Activated naive CD4-positive, alpha-beta T cell treated with anti-CD3 and anti-CD28 coated beads, Interleukin-2, amount 10 ng/mL, durations not matched to agents 7 days and 5 days (primary cell): ENCODE measurements at regions of chr1 and their contacts with region 1.

Region 1: GRCh38 chr1:207004981-207005830 is 27.4 kb downstream of the C1orf116 start:
- DNase-seq: peak; percentile 62
- H3K4me3 Mint-ChIP-seq: no peak overlapping the region
- H3K27ac Mint-ChIP-seq: no peak overlapping the region
- H3K4me1 Mint-ChIP-seq: no peaks in the 10 kb centered on the region
- H3K27me3 Mint-ChIP-seq: peaks cover 65% of the 10 kb centered on the region

Region 2: DNA sequence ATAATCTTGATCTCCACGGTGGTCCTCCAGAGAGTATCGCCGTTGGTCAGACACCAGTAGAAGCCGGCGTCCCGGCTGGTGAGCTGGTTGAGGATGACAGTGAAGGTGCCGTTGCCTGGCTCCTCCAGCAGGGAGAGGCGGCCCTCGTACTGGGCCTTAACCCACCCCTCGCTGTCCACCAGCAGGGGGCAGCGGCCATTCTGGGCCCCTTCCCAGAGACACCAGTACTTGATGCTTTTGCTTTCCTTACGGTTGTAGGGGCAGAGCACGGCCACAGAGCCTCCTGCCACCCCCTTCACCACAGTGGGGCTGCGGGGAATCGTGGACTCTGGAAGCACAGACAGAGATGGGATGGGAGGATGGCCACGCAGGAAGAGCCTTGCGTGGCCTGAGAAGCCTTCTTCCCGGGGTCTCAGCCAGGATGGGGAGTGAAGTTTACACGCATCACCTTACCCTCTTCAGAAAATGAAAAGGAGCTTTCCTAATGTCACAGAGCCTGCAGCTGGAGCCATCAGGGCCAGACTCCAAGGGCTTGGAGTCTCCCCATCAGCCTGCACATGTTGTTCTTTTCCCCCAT is 69.6 kb before region 1 on chr1:
- CTCF ChIA-PET with region 1: interaction called, 10 read pairs
- DNase-seq: peak; percentile 74
- H3K4me3 Mint-ChIP-seq: no peak overlapping the region
- H3K27ac Mint-ChIP-seq: no peak overlapping the region
- H3K4me1 Mint-ChIP-seq: peaks cover 14% of the 10 kb centered on the region
- H3K27me3 Mint-ChIP-seq: peaks cover 35% of the 10 kb centered on the region

Region 3: GRCh38 chr1:206992790-206993189 is 12.4 kb before region 1 on chr1:
- CTCF ChIA-PET with region 1: interaction called, 10 read pairs
- DNase-seq: no peak
- H3K4me3 Mint-ChIP-seq: no peak overlapping the region
- H3K27ac Mint-ChIP-seq: no peak overlapping the region
- H3K4me1 Mint-ChIP-seq: no peaks in the 10 kb centered on the region
- H3K27me3 Mint-ChIP-seq: peaks cover 57% of the 10 kb centered on the region

Region 4: DNA sequence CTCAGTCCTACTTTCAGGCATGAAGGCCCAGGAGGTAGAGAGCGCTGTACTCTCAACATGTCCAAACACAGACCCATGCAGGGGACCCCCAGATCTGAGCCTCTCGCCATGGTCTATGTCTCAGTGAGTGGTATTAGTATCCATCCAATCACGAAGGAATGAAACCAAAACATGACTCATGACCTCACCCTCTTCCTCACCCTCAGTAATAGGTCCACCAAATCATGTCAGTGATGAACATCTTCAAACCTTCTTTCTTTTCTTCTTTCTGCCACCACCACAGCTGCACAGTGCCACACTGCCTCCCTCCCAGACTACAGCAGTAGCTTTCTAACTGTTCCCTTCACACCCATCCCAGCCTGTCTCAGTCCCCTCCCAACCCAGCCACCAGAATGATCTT is 10.6 kb after region 1 on chr1:
- CTCF ChIA-PET with region 1: interaction called, 22 read pairs
- DNase-seq: no peak
- H3K4me3 Mint-ChIP-seq: no peak overlapping the region
- H3K27ac Mint-ChIP-seq: no peak overlapping the region
- H3K4me1 Mint-ChIP-seq: no peaks in the 10 kb centered on the region
- H3K27me3 Mint-ChIP-seq: peaks cover 58% of the 10 kb centered on the region